Posterior cingulate gyrus (tissue), 11 donors: ENCODE measurements at regions of chr21 and their contacts with region 1.

Region 1: DNA sequence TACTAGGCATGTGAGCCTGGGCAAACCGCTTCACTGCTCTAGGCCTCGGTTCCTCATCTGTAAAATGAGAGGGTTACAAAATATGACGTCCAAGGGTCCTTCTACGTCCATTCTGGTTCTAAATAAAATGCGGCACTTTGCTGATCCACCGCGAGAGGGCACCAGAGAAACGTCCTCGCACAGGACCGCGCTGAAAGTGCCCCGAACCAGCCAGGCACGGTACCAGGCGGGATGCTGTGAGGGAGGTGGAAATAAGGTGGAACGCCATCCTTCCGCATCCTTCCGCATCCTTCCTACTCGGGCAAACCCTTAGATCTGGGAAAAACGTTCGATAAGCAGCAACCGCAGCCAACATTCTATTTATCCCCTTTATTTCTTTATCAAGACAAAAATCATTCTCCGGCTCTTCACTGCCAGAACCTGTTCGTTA is 60.3 kb upstream of the KRTAP19-8 start:
- DNase-seq: peak; percentile 34 to 95 (median 78)

Region 2: GRCh38 chr21:31180256-31181081 is 81.9 kb after region 1 on chr21:
- intact Hi-C with region 1: loop called (anchors 2 kb)
- DNase-seq: peak in 1 of 10 donors; percentile 24

Region 3: DNA sequence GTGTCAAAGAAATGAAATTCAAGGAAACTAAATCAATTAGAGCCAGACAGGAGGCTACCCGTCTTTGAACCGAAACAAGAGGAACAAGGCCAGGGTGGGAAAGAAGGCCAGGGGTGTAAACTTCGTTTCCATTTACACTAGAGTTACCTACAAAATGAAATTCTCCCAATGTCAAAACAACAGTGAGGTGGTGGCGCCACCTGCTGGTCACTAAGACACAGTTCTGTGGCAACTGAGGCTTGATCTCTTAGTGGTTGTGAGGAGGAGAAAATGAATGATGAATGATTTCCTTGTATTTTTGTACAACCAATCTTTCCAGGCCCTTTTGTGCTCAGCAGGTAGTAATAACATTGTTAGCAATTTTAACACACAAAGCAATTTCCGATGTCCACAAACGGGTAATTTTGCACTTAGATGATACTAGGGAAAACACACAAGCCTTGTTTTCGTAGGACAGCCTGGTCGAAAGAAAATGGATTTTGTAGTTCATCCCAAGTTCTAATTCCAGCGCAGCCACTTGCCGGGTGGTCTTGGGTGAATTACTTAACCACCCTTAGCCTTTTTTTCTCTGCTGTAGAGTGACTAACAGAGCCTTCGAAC is 506.1 kb after region 1 on chr21:
- intact Hi-C with region 1: loop called (anchors 5 kb)
- DNase-seq: peak; percentile 41 to 95 (median 75)